IMR-90 (cell line): ENCODE measurements at regions of chr18 and their contacts with region 1.

Region 1: GRCh38 chr18:79797518-79798345 is at the start of gene KCNG2:
- DNase-seq: no peak
- ATAC-seq: peak; percentile 82
- H3K4me3 ChIP-seq: peak within 1 kb of the TSS; percentile 42
- H3K27ac ChIP-seq: no peak within 1 kb of the TSS
- H3K4me1 ChIP-seq: peaks cover 3% of the 10 kb centered on the region; the same call in 1 of the 2 replicates
- H3K27me3 ChIP-seq: peaks cover 30% of the 10 kb centered on the region
- CTCF ChIP-seq: peak; percentile 34
- POLR2A ChIP-seq: no peak
- RAD21 ChIP-seq: 0 out of 2 replicates have a peak, but pooled peaks have one; percentile 8
- total RNA-seq, gene KCNG2: not detected in 2 replicates

Region 2: GRCh38 chr18:79951578-79952455 is 154.1 kb after region 1 on chr18 and contains the start of gene SLC66A2:
- CTCF ChIA-PET with region 1: no interaction called
- POLR2A ChIA-PET with region 1: no interaction called
- dilution Hi-C with region 1: no loop called
- in situ Hi-C with region 1: no loop called
- intact Hi-C with region 1: loop called (anchors 5 kb)
- DNase-seq: peak; percentile 83
- ATAC-seq: peak; percentile 91
- H3K4me3 ChIP-seq: peak within 1 kb of the TSS; percentile 59
- H3K27ac ChIP-seq: peak within 1 kb of the TSS; percentile 76
- H3K4me1 ChIP-seq: peaks cover 12% of the 10 kb centered on the region
- H3K27me3 ChIP-seq: no peaks in the 10 kb centered on the region
- CTCF ChIP-seq: no peak
- POLR2A ChIP-seq: peak; percentile 69; the same call in 1 of the 2 replicates
- RAD21 ChIP-seq: no peak
- total RNA-seq, gene SLC66A2: 16.9 and 17.6 TPM in 2 replicates